ENCODE measurements at regions of chr7 and their contacts with region 1.

Region 1: GRCh38 chr7:138738551-138739335 is 37.6 kb upstream of the SVOPL start:
- DNase-seq: peak; percentile 71 to 91
- ATAC-seq: peak; percentile 75 to 95 (median 90)
- H3K4me3 ChIP-seq: no peak overlapping the region
- H3K4me3 Mint-ChIP-seq: no peak overlapping the region
- H3K27ac ChIP-seq: no peak overlapping the region
- H3K27ac Mint-ChIP-seq: no peak overlapping the region
- H3K4me1 ChIP-seq: no peaks in the 10 kb centered on the region
- H3K4me1 Mint-ChIP-seq: peaks cover 5 to 7% of the 10 kb centered on the region in 2 donors
- H3K27me3 ChIP-seq: no peaks in the 10 kb centered on the region
- H3K27me3 Mint-ChIP-seq: peaks cover 0 to 11% of the 10 kb centered on the region in 2 donors
- CTCF ChIP-seq: peak; percentile 90

Region 2: GRCh38 chr7:137606061-137606674 is 1132.6 kb before region 1 on chr7:
- intact Hi-C with region 1: loop called (anchors 5 kb)
- DNase-seq: peak in 1 of 2 donors; percentile 33
- ATAC-seq: no peak
- H3K4me3 ChIP-seq: no peak overlapping the region
- H3K4me3 Mint-ChIP-seq: no peak overlapping the region
- H3K27ac ChIP-seq: no peak overlapping the region
- H3K27ac Mint-ChIP-seq: no peak overlapping the region
- H3K4me1 ChIP-seq: no peaks in the 10 kb centered on the region
- H3K4me1 Mint-ChIP-seq: no peaks in the 10 kb centered on the region
- H3K27me3 ChIP-seq: no peaks in the 10 kb centered on the region
- H3K27me3 Mint-ChIP-seq: peaks cover 0 to 6% of the 10 kb centered on the region in 2 donors
- CTCF ChIP-seq: peak; percentile 31

Region 3: DNA sequence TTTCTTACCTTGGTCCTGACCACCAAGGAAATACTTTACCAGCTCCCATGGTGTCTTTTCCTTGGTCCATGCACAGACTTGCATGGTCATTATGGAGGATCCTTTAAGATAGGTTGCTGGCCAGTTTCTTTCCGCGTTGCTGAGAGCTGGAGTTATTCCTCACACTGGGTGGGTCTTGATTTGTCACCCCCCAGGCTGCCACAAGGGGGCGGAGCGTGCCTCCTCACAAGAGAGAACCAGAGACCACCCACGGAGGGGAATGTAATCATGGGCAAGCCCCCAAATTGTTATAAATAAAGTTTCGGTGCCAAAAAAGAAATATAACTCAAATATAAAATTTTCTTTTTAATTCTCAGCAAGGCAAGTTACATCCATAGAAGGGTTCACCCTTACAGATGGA is 289.2 kb before region 1 on chr7:
- intact Hi-C with region 1: loop called (anchors 1 kb)
- DNase-seq: peak in 1 of 2 donors; percentile 60
- ATAC-seq: peak in 2 of 3 donors; percentile 46 to 52
- H3K4me3 ChIP-seq: no peak overlapping the region
- H3K4me3 Mint-ChIP-seq: no peak overlapping the region
- H3K27ac ChIP-seq: no peak overlapping the region
- H3K27ac Mint-ChIP-seq: no peak overlapping the region
- H3K4me1 ChIP-seq: no peaks in the 10 kb centered on the region
- H3K4me1 Mint-ChIP-seq: no peaks in the 10 kb centered on the region
- H3K27me3 ChIP-seq: no peaks in the 10 kb centered on the region
- H3K27me3 Mint-ChIP-seq: no peaks in the 10 kb centered on the region
- CTCF ChIP-seq: no peak

Region 4: GRCh38 chr7:138752568-138753518 is 14.1 kb after region 1 on chr7:
- intact Hi-C with region 1: no loop called
- DNase-seq: peak; percentile 79 to 98
- ATAC-seq: peak; percentile 89 to 91 (median 89)
- H3K4me3 ChIP-seq: no peak overlapping the region
- H3K4me3 Mint-ChIP-seq: peak overlapping the region; percentile 31
- H3K27ac ChIP-seq: peak overlapping the region; percentile 66
- H3K27ac Mint-ChIP-seq: peak overlapping the region; percentile 83
- H3K4me1 ChIP-seq: peaks cover 40% of the 10 kb centered on the region
- H3K4me1 Mint-ChIP-seq: peaks cover 16 to 36% of the 10 kb centered on the region in 2 donors
- H3K27me3 ChIP-seq: no peaks in the 10 kb centered on the region
- H3K27me3 Mint-ChIP-seq: peaks cover 0 to 7% of the 10 kb centered on the region in 2 donors
- CTCF ChIP-seq: no peak

Measured in natural killer cell (primary cell).